ENCODE measurements at regions of chr6 and their contacts with region 1.

Region 1: DNA sequence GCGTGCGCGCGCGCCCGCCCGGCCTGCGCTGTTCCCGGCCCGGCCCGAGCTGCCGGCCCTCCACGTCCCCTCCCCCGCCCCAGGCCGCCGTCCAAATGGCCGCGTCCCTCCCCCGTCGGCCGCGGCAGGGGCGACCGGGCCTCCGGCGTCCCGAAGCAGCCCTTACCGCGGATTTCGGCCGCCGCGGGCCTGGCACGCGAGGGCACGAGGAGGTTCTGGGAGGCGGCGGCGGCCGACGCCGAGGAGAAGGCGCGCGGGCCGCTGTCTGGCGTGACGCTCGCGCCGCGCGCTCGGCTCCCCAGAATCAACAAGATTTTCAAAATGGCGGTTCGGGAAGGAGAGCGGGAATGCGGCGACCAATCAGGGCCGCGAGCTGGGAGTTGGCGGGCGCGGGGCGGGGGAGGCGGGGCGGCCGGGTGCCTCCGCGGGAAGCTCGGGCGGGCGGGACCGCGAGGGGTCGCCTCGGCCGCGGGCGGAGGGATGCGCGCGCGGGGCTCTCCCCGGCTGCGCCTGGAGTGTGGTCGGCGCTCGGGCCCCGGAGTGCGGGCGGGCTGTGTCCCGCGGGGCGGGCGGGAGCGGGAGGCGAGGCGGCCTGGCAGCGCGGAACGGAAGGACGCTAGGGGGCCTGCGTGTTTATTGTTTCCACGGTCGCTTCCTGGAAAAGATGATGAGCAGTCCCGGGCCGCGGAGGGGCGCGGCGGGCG is at the start of gene DEK:
- DNase-seq: peak; percentile 80
- ATAC-seq: peak; percentile 51
- H3K4me3 ChIP-seq: peak within 1 kb of the TSS; percentile 76
- H3K27ac ChIP-seq: peak within 1 kb of the TSS; percentile 75
- H3K4me1 ChIP-seq: peaks cover 43% of the 10 kb centered on the region
- H3K27me3 ChIP-seq: no peaks in the 10 kb centered on the region
- CTCF ChIP-seq: peak; percentile 54; the same call in 1 of the 2 replicates
- total RNA-seq, gene DEK: 155 and 170 TPM in 2 replicates

Region 2: GRCh38 chr6:18155150-18155863 is 109.1 kb before region 1 on chr6 and contains the start of gene KDM1B:
- CTCF ChIA-PET with region 1: no interaction called
- POLR2A ChIA-PET with region 1: interaction called, 3 read pairs
- intact Hi-C with region 1: loop called (anchors 2 kb)
- DNase-seq: peak; percentile 97
- ATAC-seq: peak; percentile 91
- H3K4me3 ChIP-seq: peak within 1 kb of the TSS; percentile 93
- H3K27ac ChIP-seq: peak within 1 kb of the TSS; percentile 52
- H3K4me1 ChIP-seq: peaks cover 20% of the 10 kb centered on the region
- H3K27me3 ChIP-seq: no peaks in the 10 kb centered on the region
- CTCF ChIP-seq: no peak
- total RNA-seq, gene KDM1B: 25.0 and 31.1 TPM in 2 replicates

Region 3: GRCh38 chr6:18216411-18216810 is 48.0 kb before region 1 on chr6:
- CTCF ChIA-PET with region 1: no interaction called
- POLR2A ChIA-PET with region 1: no interaction called
- intact Hi-C with region 1: no loop called
- DNase-seq: peak; percentile 73
- ATAC-seq: peak; percentile 93
- H3K4me3 ChIP-seq: no peak overlapping the region
- H3K27ac ChIP-seq: peak overlapping the region; percentile 13
- H3K4me1 ChIP-seq: peaks cover 15% of the 10 kb centered on the region
- H3K27me3 ChIP-seq: no peaks in the 10 kb centered on the region
- CTCF ChIP-seq: no peak

Region 4: DNA sequence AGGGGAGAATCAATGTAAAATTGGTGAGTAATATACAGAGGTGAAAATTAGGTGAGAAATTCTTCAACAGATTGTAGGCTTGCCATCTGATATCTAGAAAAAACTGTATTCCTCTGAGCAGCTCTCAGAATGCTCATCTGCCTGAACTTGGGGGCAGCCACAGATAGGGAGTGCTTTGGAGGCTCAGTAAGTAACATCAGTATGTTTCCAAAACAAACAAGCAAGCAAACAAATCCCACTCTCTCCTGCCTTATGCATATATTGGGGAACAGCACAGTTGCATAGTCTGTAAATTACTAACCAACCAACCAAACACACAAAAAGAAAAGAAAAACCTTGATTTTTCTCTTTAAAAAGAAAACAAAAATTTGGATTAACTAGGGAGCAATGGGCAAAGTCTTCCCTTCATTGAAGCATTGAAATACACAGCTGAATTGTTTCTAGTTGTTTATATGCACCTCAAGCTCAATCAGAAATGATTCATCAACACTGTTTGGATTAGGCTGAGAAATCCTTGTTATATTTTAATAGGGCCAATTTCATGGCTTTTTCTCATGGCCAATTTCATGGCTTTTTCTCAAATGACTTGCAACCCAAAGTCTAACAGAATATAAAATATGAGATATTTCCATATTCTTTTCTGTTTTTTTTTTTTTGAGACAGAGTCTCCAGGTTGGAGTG is 50.1 kb after region 1 on chr6:
- CTCF ChIA-PET with region 1: interaction called, 3 read pairs
- POLR2A ChIA-PET with region 1: no interaction called
- intact Hi-C with region 1: loop called (anchors 2 kb)
- DNase-seq: no peak
- ATAC-seq: peak; percentile 91
- H3K4me3 ChIP-seq: no peak overlapping the region
- H3K27ac ChIP-seq: peak overlapping the region; percentile 48
- H3K4me1 ChIP-seq: no peaks in the 10 kb centered on the region
- H3K27me3 ChIP-seq: no peaks in the 10 kb centered on the region
- CTCF ChIP-seq: no peak

Region 5: GRCh38 chr6:18359237-18359885 is 95.0 kb after region 1 on chr6:
- CTCF ChIA-PET with region 1: no interaction called
- POLR2A ChIA-PET with region 1: no interaction called
- intact Hi-C with region 1: no loop called
- DNase-seq: no peak
- ATAC-seq: no peak
- H3K4me3 ChIP-seq: no peak overlapping the region
- H3K27ac ChIP-seq: no peak overlapping the region
- H3K4me1 ChIP-seq: peaks cover 5% of the 10 kb centered on the region; the same call in 1 of the 2 replicates
- H3K27me3 ChIP-seq: no peaks in the 10 kb centered on the region
- CTCF ChIP-seq: no peak

Region 6: GRCh38 chr6:18405477-18406293 is 141.3 kb after region 1 on chr6:
- CTCF ChIA-PET with region 1: no interaction called
- POLR2A ChIA-PET with region 1: no interaction called
- intact Hi-C with region 1: loop called (anchors 5 kb)
- DNase-seq: peak; percentile 96
- ATAC-seq: peak; percentile 98
- H3K4me3 ChIP-seq: peak overlapping the region; percentile 31; the same call in 1 of the 2 replicates
- H3K27ac ChIP-seq: peak overlapping the region; percentile 97
- H3K4me1 ChIP-seq: peaks cover 30% of the 10 kb centered on the region
- H3K27me3 ChIP-seq: no peaks in the 10 kb centered on the region
- CTCF ChIP-seq: no peak

Region 7: GRCh38 chr6:18503593-18504231 is 239.3 kb after region 1 on chr6:
- CTCF ChIA-PET with region 1: no interaction called
- POLR2A ChIA-PET with region 1: no interaction called
- intact Hi-C with region 1: loop called (anchors 5 kb)
- DNase-seq: peak; percentile 81
- ATAC-seq: peak; percentile 92
- H3K4me3 ChIP-seq: peak overlapping the region; percentile 58
- H3K27ac ChIP-seq: peak overlapping the region; percentile 9; the same call in 1 of the 2 replicates
- H3K4me1 ChIP-seq: peaks cover 6% of the 10 kb centered on the region; the same call in 1 of the 2 replicates
- H3K27me3 ChIP-seq: no peaks in the 10 kb centered on the region
- CTCF ChIP-seq: peak; percentile 98

Measured in PC-3 (cell line).